Activated CD4-positive, alpha-beta memory T cell treated with anti-CD3 and anti-CD28 coated beads for 36 hours (primary cell): ENCODE measurements at regions of chr10 and their contacts with region 1.

Region 1: DNA sequence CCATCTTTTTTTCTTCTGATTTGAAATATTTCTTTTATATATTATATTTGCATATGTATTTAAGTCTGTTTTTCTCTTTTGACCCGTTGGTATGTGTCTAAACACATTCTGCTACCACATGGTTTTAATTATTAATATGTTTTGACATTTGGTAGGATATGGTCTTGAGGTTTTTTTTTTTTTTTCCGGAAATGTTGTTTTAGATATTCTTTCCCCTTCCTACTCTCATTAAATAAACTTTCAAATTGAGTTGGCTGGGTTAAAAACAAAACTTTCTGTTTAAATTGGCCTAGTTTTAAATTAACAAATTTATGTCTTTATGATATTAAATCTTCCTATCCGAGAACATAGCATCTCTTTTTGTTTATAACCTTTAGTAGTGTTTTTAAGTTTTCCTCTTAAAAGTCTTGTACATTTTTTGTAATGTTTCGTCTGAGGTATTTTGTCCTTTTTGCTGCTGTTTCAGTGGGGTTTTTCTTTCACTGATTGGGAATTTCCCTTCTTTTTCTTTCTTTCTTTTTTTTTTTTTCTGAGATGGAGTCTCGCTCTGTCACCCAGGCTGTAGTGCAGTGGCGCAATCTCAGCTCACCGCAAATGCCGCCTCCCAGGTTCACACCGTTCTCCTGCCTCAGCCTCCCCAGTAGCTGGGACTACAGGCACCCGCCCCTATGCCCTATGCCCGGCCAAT is 25.4 kb downstream of the STAM start:
- DNase-seq: peak; percentile 81
- H3K4me3 Mint-ChIP-seq: peak overlapping the region; percentile 71
- H3K27ac Mint-ChIP-seq: peak overlapping the region; percentile 81
- H3K4me1 Mint-ChIP-seq: peaks cover 65% of the 10 kb centered on the region
- H3K27me3 Mint-ChIP-seq: no peaks in the 10 kb centered on the region

Region 2: GRCh38 chr10:17512341-17513001 is 156.9 kb before region 1 on chr10:
- CTCF ChIA-PET with region 1: no interaction called
- POLR2A ChIA-PET with region 1: no interaction called
- intact Hi-C with region 1: loop called (anchors 1 kb)
- DNase-seq: no peak
- H3K4me3 Mint-ChIP-seq: no peak overlapping the region
- H3K27ac Mint-ChIP-seq: peak overlapping the region; percentile 64
- H3K4me1 Mint-ChIP-seq: peaks cover 35% of the 10 kb centered on the region
- H3K27me3 Mint-ChIP-seq: no peaks in the 10 kb centered on the region

Region 3: DNA sequence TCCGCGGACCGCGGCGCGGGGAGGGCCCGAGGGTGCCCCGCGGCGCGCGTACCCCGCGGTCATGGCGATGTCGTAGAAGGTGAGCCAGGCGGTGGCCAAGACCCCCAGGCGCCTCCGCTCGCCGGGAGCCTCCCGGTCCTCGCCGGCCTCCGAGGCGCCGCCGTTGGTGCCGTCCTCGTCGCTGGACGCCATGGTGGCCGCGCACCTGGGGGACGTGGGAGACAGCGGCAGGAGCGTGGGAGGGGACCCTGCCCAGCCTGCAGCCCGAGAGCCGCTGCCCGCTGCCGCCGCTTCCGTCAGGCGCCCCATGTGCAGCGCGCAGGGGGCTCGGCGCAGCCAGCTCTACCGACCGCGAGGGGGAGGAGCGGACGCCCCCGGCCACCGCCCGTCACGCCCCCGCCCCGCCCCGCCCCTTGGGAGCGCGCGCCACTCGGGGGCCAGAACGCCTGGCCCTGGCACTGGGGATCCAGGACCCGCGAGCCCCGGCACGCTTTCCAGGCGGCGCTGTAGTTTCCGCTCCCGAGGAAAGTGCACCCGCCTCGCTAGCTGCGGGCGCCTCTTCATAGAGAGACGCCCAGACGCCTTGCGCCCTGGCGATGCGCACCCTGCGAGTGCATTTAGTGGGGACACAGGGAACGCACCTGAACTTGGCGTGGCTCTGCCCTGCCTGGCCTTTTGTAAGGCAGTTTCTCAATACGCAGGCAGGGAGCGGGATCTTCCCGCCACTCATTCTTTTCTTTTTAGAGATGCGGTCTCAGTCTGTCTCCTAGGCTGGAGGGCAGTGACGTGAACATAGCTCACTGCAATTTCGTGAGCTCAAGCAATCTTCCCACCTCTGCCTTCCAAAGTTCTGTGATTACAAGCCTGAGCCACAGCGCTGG is 52.1 kb before region 1 on chr10 and contains the start of gene HACD1:
- CTCF ChIA-PET with region 1: no interaction called
- POLR2A ChIA-PET with region 1: interaction called, 3 read pairs
- intact Hi-C with region 1: loop called (anchors 2 kb)
- DNase-seq: peak; percentile 71
- H3K4me3 Mint-ChIP-seq: peak within 1 kb of the TSS; percentile 83
- H3K27ac Mint-ChIP-seq: peak within 1 kb of the TSS; percentile 45
- H3K4me1 Mint-ChIP-seq: peaks cover 4% of the 10 kb centered on the region
- H3K27me3 Mint-ChIP-seq: peaks cover 17% of the 10 kb centered on the region
- total RNA-seq, gene HACD1: 3.3 to 4.1 TPM

Region 4: DNA sequence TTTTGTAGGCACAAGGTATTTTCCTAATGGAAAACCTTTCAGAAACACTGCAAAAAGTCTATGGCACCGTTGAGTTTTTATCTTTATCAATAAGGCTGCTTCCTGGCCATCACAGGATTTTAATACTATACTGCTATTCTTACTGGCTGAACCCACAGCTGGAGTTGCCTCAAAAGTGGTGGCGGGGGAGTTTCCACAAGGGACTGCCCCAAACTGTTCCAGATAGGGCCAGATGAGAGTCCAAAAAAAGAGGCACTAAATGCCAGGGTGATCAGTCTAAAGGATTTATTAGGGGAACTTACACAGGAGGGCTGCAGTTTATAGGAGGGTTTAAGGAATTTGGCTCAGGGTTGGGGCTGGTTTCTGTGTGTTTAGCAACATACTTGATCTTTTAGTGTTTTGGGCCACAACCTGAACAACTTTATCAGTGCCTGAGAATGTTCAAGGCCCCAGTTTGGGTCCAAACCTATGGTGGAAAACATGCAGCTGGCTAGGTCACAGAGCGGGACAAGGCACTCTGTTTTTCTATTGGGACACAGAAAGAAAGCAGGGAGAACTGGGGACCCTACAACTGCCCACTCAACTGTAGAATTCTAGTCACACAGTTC is 16.0 kb after region 1 on chr10:
- CTCF ChIA-PET with region 1: interaction called, 3 read pairs
- POLR2A ChIA-PET with region 1: no interaction called
- intact Hi-C with region 1: loop called (anchors 1 kb)
- DNase-seq: peak; percentile 75
- H3K4me3 Mint-ChIP-seq: no peak overlapping the region
- H3K27ac Mint-ChIP-seq: peak overlapping the region; percentile 57
- H3K4me1 Mint-ChIP-seq: peaks cover 37% of the 10 kb centered on the region
- H3K27me3 Mint-ChIP-seq: no peaks in the 10 kb centered on the region